ENCODE measurements at regions of chr18 and their contacts with region 1.

Region 1: GRCh38 chr18:55234366-55235093 is 275.3 kb upstream of the CCDC68 start:
- DNase-seq: peak; percentile 75 to 91 (median 84)
- H3K4me3 ChIP-seq: peak overlapping the region in 31 of 59 donors; percentile 2 to 46 (median 21)
- H3K27ac ChIP-seq: peak overlapping the region in 58 of 59 donors; percentile 32 to 89 (median 74)
- H3K27me3 ChIP-seq: no peaks in the 10 kb centered on the region
- CTCF ChIP-seq: peak; percentile 60 to 93 (median 87)

Region 2: GRCh38 chr18:55322178-55322735 is 87.7 kb after region 1 on chr18:
- intact Hi-C with region 1: loop called (anchors 5 kb)
- DNase-seq: peak; percentile 65 to 88 (median 84)
- H3K4me3 ChIP-seq: peak overlapping the region; percentile 47 to 86 (median 75)
- H3K27ac ChIP-seq: peak overlapping the region; percentile 88 to 100 (median 99)
- H3K27me3 ChIP-seq: no peaks in the 10 kb centered on the region
- CTCF ChIP-seq: peak in 43 of 56 donors; percentile 6 to 57 (median 29)

Region 3: GRCh38 chr18:55415258-55415871 is 180.8 kb after region 1 on chr18:
- intact Hi-C with region 1: loop called in 1 of 2 experiments (anchors 2 kb)
- DNase-seq: peak; percentile 85 to 95 (median 90)
- H3K4me3 ChIP-seq: peak overlapping the region in 2 of 59 donors; percentile 4 to 8
- H3K27ac ChIP-seq: peak overlapping the region in 53 of 59 donors; percentile 0 to 99 (median 81)
- H3K27me3 ChIP-seq: no peaks in the 10 kb centered on the region
- CTCF ChIP-seq: peak; percentile 86 to 99 (median 95)

Region 4: DNA sequence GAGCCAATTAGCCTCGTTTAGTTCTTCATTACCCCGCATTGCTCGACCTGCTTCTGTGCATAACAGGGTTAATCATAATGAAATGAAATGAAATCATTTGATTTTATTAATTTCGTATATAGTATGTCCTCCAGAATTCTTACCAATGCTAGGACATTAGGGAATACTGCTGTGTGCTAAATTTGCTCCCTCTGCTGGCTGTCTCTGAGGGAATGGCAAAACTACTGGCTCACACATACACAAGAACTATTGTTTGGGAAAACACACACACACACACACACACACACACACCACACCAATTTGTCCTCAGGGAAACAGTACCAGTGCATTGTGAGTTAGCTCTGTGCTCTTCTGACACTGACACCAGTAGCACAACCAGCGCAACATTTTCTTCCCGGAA is 626.7 kb after region 1 on chr18:
- intact Hi-C with region 1: loop called in 1 of 2 experiments (anchors 10 kb)
- DNase-seq: peak in 5 of 10 donors; percentile 13 to 76 (median 58)
- H3K4me3 ChIP-seq: peak overlapping the region in 2 of 59 donors; percentile 11 to 14
- H3K27ac ChIP-seq: peak overlapping the region in 52 of 59 donors; percentile 3 to 85 (median 74)
- H3K27me3 ChIP-seq: no peaks in the 10 kb centered on the region
- CTCF ChIP-seq: peak; percentile 31 to 71 (median 57)